ENCODE measurements at regions of chr11 and their contacts with region 1.

Region 1: GRCh38 chr11:120178561-120179056 is 32.2 kb upstream of the OAF start:
- DNase-seq: no peak
- ATAC-seq: no peak
- H3K4me3 Mint-ChIP-seq: no peak overlapping the region
- H3K27ac Mint-ChIP-seq: no peak overlapping the region
- H3K4me1 Mint-ChIP-seq: no peaks in the 10 kb centered on the region
- H3K27me3 Mint-ChIP-seq: peaks cover 8% of the 10 kb centered on the region
- CTCF ChIP-seq: no peak

Region 2: DNA sequence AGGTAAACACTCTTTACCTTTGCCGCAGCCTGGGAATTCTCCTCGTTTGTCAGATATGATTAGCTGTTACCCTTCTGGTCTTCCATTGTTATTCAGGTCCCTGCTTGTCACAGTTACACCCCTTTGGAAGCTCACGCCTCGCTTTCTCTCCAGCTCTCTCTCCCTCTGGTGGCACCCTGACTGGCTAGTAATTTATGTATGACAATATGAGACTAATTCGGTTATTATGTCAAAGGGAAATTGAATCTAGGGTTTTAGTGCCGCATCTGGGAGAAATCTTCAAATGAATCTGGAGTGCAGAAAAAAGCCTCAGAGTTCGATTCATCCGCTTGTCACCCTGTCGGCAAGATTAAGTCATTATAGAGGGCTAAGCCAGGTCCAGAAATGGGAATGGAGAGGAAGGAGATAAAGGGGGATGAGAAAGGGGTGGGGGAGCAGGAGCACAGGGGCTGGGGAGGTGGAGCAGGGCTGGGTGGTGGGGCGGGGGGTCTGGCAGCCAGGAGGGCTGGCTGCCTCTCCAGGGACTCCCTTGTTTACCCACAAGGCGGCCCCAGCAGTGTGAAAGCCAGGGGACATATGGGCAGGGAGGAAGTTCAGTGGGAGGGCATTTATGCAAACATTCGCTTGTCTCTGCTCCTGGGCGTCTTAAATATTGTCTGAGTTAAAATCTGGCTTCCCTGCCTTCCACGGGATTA is 270.6 kb before region 1 on chr11:
- CTCF ChIA-PET with region 1: no interaction called
- POLR2A ChIA-PET with region 1: no interaction called
- intact Hi-C with region 1: no loop called
- DNase-seq: no peak
- ATAC-seq: no peak
- H3K4me3 Mint-ChIP-seq: no peak overlapping the region
- H3K27ac Mint-ChIP-seq: no peak overlapping the region
- H3K4me1 Mint-ChIP-seq: no peaks in the 10 kb centered on the region
- H3K27me3 Mint-ChIP-seq: peaks cover 9% of the 10 kb centered on the region
- CTCF ChIP-seq: no peak

Region 3: DNA sequence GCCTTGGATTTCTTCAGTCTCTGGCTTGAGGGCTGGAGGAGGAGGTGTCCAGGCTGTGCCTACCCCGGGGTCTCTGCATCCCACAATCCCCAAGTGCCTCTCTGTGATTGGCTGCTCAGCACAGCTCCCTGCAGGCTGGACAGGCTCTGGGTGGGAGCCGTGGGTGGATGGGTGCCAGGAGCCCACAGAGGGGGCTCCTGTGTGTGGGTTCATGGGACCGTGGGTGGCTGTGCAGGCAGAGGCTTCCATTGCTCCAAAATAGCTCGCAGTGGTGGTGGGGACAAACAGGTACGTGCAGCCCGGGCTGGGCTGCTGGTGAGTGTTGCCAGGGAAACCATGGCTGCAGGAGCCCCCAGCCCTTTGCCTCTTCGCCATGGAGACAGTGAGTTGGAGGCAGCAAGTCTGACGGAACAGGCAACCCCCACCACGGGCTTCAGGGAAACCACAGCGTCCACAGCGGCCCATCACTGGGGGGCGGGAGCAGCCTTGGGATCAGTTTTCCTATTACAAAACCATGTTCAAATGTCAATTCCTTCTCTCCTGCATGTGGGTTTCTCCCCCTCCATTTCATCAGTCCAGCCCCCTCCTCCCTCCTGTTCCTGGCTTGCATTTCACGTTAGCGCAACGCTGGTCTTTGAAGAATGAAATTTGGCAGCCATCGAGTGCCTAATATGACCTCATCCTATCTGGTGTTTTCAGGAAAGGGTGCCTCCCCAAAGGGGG is 195.9 kb before region 1 on chr11:
- CTCF ChIA-PET with region 1: no interaction called
- POLR2A ChIA-PET with region 1: no interaction called
- intact Hi-C with region 1: no loop called
- DNase-seq: no peak
- ATAC-seq: no peak
- H3K4me3 Mint-ChIP-seq: no peak overlapping the region
- H3K27ac Mint-ChIP-seq: no peak overlapping the region
- H3K4me1 Mint-ChIP-seq: no peaks in the 10 kb centered on the region
- H3K27me3 Mint-ChIP-seq: peaks cover 6% of the 10 kb centered on the region
- CTCF ChIP-seq: no peak

Region 4: GRCh38 chr11:120128782-120129172 is 49.8 kb before region 1 on chr11:
- CTCF ChIA-PET with region 1: no interaction called
- POLR2A ChIA-PET with region 1: no interaction called
- intact Hi-C with region 1: no loop called
- DNase-seq: no peak
- ATAC-seq: no peak
- H3K4me3 Mint-ChIP-seq: no peak overlapping the region
- H3K27ac Mint-ChIP-seq: no peak overlapping the region
- H3K4me1 Mint-ChIP-seq: no peaks in the 10 kb centered on the region
- H3K27me3 Mint-ChIP-seq: peaks cover 1% of the 10 kb centered on the region
- CTCF ChIP-seq: no peak

Region 5: DNA sequence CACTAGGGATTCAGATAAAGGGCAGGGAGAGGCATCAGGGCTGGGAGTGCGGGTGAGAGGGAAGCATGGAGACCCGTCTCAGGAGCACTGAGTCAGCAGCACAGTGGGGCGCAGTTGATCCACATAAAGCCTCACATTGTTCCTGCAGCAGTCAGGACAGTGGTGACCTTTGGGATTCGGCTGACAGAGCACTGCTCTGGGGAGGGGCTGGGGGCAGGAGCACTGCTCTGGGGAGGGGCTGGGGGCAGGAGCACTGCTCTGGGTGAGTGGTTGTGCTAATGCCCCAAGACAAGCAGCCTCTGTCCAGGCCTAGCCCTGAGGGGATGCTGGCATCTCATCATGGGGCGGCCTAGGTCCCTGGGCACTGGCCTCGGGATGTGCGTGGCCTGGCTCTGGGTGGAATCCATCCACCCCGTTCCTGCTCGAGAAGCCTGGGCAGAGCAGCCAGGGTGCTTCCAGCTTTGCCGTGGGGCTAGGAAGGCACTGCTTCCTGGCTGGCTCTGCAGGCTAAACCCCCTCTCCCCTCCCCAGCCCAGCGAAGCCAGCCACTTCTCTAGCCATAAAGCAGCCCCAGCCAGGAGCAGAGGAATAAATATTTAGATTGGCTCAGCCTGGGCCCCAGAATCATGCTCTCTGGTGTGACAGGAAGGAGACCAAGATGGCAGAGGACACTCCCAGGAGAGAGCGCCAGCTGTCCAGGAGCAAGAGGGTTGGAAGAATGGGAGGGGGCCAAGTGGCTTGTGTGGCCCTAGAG is 39.5 kb after region 1 on chr11:
- CTCF ChIA-PET with region 1: no interaction called
- POLR2A ChIA-PET with region 1: no interaction called
- intact Hi-C with region 1: no loop called
- DNase-seq: no peak
- ATAC-seq: no peak
- H3K4me3 Mint-ChIP-seq: no peak overlapping the region
- H3K27ac Mint-ChIP-seq: no peak overlapping the region
- H3K4me1 Mint-ChIP-seq: peaks cover 4% of the 10 kb centered on the region
- H3K27me3 Mint-ChIP-seq: no peaks in the 10 kb centered on the region
- CTCF ChIP-seq: no peak

Region 6: GRCh38 chr11:120229451-120230424 is 51.1 kb after region 1 on chr11:
- CTCF ChIA-PET with region 1: interaction called, 88 read pairs
- POLR2A ChIA-PET with region 1: no interaction called
- intact Hi-C with region 1: loop called (anchors 2 kb)
- DNase-seq: peak; percentile 50
- ATAC-seq: peak; percentile 45
- H3K4me3 Mint-ChIP-seq: no peak overlapping the region
- H3K27ac Mint-ChIP-seq: no peak overlapping the region
- H3K4me1 Mint-ChIP-seq: peaks cover 4% of the 10 kb centered on the region
- H3K27me3 Mint-ChIP-seq: peaks cover 5% of the 10 kb centered on the region
- CTCF ChIP-seq: peak; percentile 72

Measured in activated CD8-positive, alpha-beta T cell treated with anti-CD3 and anti-CD28 coated beads for 36 hours (primary cell).